Mammary epithelial cell (primary cell): ENCODE measurements at regions of chr16 and their contacts with region 1.

Region 1: DNA sequence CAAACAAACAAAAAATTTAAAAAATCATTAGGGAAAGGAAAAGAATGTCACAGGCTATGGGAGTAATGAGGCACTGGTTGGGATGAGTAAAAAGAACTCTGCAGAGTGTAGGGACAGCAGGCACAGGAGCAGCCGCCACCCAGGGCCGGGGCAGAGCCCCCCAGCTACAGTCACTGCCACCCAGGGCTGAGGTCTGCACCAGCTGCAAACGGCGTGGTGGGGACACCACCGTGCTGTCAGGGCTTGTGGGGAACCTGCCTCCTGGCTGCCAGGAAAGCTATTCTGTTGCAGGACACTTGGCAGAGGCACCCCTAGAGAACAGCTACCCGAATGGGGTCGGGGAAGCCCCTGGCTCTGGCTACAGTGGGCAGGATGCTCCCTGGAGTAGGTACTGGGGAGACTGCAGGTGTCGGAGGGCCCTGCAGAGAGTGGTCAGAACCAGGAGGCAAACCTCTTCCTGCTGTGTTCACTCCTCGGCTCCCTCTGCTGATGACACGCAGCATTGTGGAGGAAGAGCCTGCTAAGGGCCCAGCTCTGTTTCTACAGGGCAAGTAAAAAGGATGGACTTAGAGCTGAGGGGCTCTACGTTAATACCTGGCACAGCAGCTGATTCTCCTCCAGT is 32.3 kb upstream of the CAPN15 start:
- DNase-seq: peak; percentile 15
- H3K4me3 ChIP-seq: no peak overlapping the region
- H3K27ac ChIP-seq: no peak overlapping the region
- H3K4me1 ChIP-seq: no peaks in the 10 kb centered on the region
- H3K27me3 ChIP-seq: no peaks in the 10 kb centered on the region
- CTCF ChIP-seq: peak; percentile 31 to 34

Region 2: DNA sequence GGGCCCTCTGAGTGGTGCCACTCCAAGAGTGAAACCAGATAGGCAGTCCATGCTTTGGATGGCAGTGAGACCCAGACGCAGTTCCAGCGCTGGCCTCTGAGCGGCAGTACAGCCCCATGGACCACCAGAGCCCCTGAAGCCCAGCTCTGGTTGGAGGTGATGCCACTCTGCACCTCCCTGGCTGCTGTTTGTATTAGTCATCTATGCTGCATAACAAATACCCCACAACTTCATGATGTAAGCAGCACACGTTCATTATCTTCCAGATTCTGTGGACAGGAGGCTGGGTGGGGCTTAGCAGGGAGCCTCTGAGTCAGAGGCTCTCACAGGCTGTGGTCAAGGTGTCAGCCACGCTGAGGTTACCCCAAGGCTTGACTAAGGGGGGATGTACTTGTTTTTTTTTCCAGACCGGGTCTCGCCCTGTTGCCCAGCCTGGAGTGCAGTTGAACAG is 103.3 kb before region 1 on chr16:
- CTCF ChIA-PET with region 1: no interaction called
- dilution Hi-C with region 1: no loop called
- in situ Hi-C with region 1: no loop called
- intact Hi-C with region 1: loop called (anchors 5 kb)
- DNase-seq: peak; percentile 83
- H3K4me3 ChIP-seq: no peak overlapping the region
- H3K27ac ChIP-seq: no peak overlapping the region
- H3K4me1 ChIP-seq: no peaks in the 10 kb centered on the region
- H3K27me3 ChIP-seq: no peaks in the 10 kb centered on the region
- CTCF ChIP-seq: peak; percentile 66 to 95

Region 3: GRCh38 chr16:660459-661183 is 165.4 kb after region 1 on chr16:
- CTCF ChIA-PET with region 1: no interaction called
- dilution Hi-C with region 1: no loop called
- in situ Hi-C with region 1: no loop called
- intact Hi-C with region 1: no loop called
- DNase-seq: peak; percentile 51
- H3K4me3 ChIP-seq: no peak overlapping the region
- H3K27ac ChIP-seq: no peak overlapping the region
- H3K4me1 ChIP-seq: peaks cover 11% of the 10 kb centered on the region
- H3K27me3 ChIP-seq: no peaks in the 10 kb centered on the region
- CTCF ChIP-seq: peak; percentile 11 to 50